ENCODE measurements at regions of chr5 and their contacts with region 1.

Region 1: GRCh38 chr5:170542691-170543293 is 39.0 kb downstream of the KCNIP1 start:
- DNase-seq: peak in 1 of 2 experiments; percentile 26
- H3K4me3 ChIP-seq: no peak overlapping the region
- H3K4me3 Mint-ChIP-seq: no peak overlapping the region
- H3K27ac Mint-ChIP-seq: no peak overlapping the region
- H3K4me1 ChIP-seq: peaks cover 6% of the 10 kb centered on the region; the same call in 1 of the 2 replicates
- H3K4me1 Mint-ChIP-seq: peaks cover 13% of the 10 kb centered on the region
- H3K27me3 ChIP-seq: no peaks in the 10 kb centered on the region
- H3K27me3 Mint-ChIP-seq: no peaks in the 10 kb centered on the region
- CTCF ChIP-seq: no peak

Region 2: GRCh38 chr5:170497100-170498038 is 45.4 kb before region 1 on chr5:
- CTCF ChIA-PET with region 1: no interaction called
- POLR2A ChIA-PET with region 1: no interaction called
- intact Hi-C with region 1: loop called (anchors 2 kb)
- DNase-seq: no peak
- H3K4me3 ChIP-seq: no peak overlapping the region
- H3K4me3 Mint-ChIP-seq: no peak overlapping the region
- H3K27ac Mint-ChIP-seq: no peak overlapping the region
- H3K4me1 ChIP-seq: peaks cover 12% of the 10 kb centered on the region
- H3K4me1 Mint-ChIP-seq: peaks cover 11% of the 10 kb centered on the region
- H3K27me3 ChIP-seq: no peaks in the 10 kb centered on the region
- H3K27me3 Mint-ChIP-seq: no peaks in the 10 kb centered on the region
- CTCF ChIP-seq: no peak

Region 3: GRCh38 chr5:170584450-170585058 is 41.8 kb after region 1 on chr5:
- CTCF ChIA-PET with region 1: no interaction called
- POLR2A ChIA-PET with region 1: no interaction called
- intact Hi-C with region 1: no loop called
- DNase-seq: no peak
- H3K4me3 ChIP-seq: no peak overlapping the region
- H3K4me3 Mint-ChIP-seq: no peak overlapping the region
- H3K27ac Mint-ChIP-seq: no peak overlapping the region
- H3K4me1 ChIP-seq: no peaks in the 10 kb centered on the region
- H3K4me1 Mint-ChIP-seq: no peaks in the 10 kb centered on the region
- H3K27me3 ChIP-seq: no peaks in the 10 kb centered on the region
- H3K27me3 Mint-ChIP-seq: peaks cover 6% of the 10 kb centered on the region
- CTCF ChIP-seq: no peak

Measured in Caco-2 (cell line).